ENCODE measurements at regions of chr4 and their contacts with region 1.

Region 1: GRCh38 chr4:104205116-104205515 is 289.6 kb downstream of the CXXC4 start:
- DNase-seq: no peak
- ATAC-seq: no peak
- H3K4me3 Mint-ChIP-seq: no peak overlapping the region
- H3K27ac Mint-ChIP-seq: no peak overlapping the region
- H3K4me1 Mint-ChIP-seq: no peaks in the 10 kb centered on the region
- H3K27me3 Mint-ChIP-seq: no peaks in the 10 kb centered on the region
- CTCF ChIP-seq: no peak

Region 2: DNA sequence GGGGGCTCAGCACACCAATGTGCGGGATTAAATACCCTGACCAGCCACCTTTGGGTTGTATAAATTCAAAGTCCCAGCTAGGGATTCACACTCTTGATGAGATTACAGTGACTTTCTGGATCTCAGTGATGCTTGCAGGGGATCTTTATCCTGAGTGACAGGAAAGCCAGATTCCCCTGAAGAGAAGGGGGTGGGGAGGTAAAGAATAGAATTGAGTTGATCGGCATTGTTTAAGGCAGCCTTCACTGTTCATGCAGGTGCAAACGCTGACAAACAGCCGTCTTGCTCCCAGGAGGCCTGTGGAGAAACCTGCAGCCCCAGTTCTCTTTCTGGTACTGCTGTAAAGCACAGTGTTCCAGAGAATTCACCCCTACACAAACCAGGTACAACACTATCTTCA is 270.5 kb after region 1 on chr4:
- CTCF ChIA-PET with region 1: no interaction called
- POLR2A ChIA-PET with region 1: no interaction called
- intact Hi-C with region 1: loop called (anchors 5 kb)
- DNase-seq: no peak
- ATAC-seq: no peak
- H3K4me3 Mint-ChIP-seq: no peak overlapping the region
- H3K27ac Mint-ChIP-seq: no peak overlapping the region
- H3K4me1 Mint-ChIP-seq: no peaks in the 10 kb centered on the region
- H3K27me3 Mint-ChIP-seq: peaks cover 2% of the 10 kb centered on the region
- CTCF ChIP-seq: no peak

Region 3: GRCh38 chr4:104641427-104641826 is 436.3 kb after region 1 on chr4:
- CTCF ChIA-PET with region 1: no interaction called
- POLR2A ChIA-PET with region 1: no interaction called
- intact Hi-C with region 1: no loop called
- DNase-seq: no peak
- ATAC-seq: no peak
- H3K4me3 Mint-ChIP-seq: no peak overlapping the region
- H3K27ac Mint-ChIP-seq: no peak overlapping the region
- H3K4me1 Mint-ChIP-seq: no peaks in the 10 kb centered on the region
- H3K27me3 Mint-ChIP-seq: no peaks in the 10 kb centered on the region
- CTCF ChIP-seq: no peak

Region 4: GRCh38 chr4:104763554-104764222 is 558.6 kb after region 1 on chr4:
- CTCF ChIA-PET with region 1: no interaction called
- POLR2A ChIA-PET with region 1: no interaction called
- intact Hi-C with region 1: no loop called
- DNase-seq: no peak
- ATAC-seq: no peak
- H3K4me3 Mint-ChIP-seq: no peak overlapping the region
- H3K27ac Mint-ChIP-seq: no peak overlapping the region
- H3K4me1 Mint-ChIP-seq: no peaks in the 10 kb centered on the region
- H3K27me3 Mint-ChIP-seq: no peaks in the 10 kb centered on the region
- CTCF ChIP-seq: no peak